Ascending aorta (tissue), 2 donors: ENCODE measurements at regions of chrX and their contacts with region 1.

Region 1: DNA sequence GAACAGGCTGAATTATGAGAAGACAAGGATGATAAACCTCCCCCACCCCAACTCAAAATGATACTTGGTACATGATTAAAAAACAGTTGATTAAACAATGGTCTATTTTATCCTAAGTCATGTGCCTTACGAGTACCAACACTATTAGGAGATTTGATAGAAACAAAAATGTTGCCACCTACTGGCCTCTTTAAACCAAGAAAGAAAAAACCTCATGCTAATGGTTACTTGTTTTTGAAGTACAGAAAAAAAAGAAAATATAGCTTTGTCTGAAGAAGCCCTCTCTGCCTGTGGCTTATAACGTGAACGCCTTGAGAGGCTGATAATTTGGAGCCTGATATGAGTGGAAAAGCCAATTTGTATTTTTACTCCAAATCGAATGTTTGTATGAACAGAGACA is 538.2 kb downstream of the DMD start:
- DNase-seq: no peak
- H3K4me3 ChIP-seq: no peak overlapping the region
- H3K27ac ChIP-seq: no peak overlapping the region
- H3K4me1 ChIP-seq: no peaks in the 10 kb centered on the region
- H3K27me3 ChIP-seq: no peaks in the 10 kb centered on the region
- CTCF ChIP-seq: no peak

Region 2: DNA sequence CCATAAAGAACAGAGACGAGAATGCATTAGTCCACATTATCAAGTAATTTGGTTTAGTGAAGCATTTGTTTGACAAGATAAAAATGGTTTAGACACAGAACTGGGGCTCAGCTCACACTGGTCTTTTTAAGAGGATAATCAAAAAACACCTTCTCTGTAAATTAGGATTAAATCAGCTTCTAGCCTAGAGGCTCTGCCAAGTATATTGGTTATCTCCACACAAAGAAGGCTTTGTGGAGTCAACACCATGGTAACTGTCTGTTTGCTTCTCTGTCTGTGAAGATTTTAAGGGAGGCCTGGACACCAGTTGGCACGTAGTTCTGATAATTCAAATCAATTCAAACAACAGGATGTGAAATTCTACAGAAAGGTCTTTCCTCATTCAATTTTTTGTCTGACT is 148.8 kb before region 1 on chrX:
- intact Hi-C with region 1: loop called (anchors 10 kb)
- DNase-seq: no peak
- H3K4me3 ChIP-seq: no peak overlapping the region
- H3K27ac ChIP-seq: no peak overlapping the region
- H3K4me1 ChIP-seq: no peaks in the 10 kb centered on the region
- H3K27me3 ChIP-seq: no peaks in the 10 kb centered on the region
- CTCF ChIP-seq: no peak

Region 3: GRCh38 chrX:32562261-32562660 is 110.9 kb before region 1 on chrX:
- intact Hi-C with region 1: no loop called
- DNase-seq: no peak
- H3K4me3 ChIP-seq: no peak overlapping the region
- H3K27ac ChIP-seq: no peak overlapping the region
- H3K4me1 ChIP-seq: no peaks in the 10 kb centered on the region
- H3K27me3 ChIP-seq: no peaks in the 10 kb centered on the region
- CTCF ChIP-seq: no peak

Region 4: GRCh38 chrX:32644476-32645245 is 28.5 kb before region 1 on chrX:
- intact Hi-C with region 1: no loop called
- DNase-seq: no peak
- H3K4me3 ChIP-seq: no peak overlapping the region
- H3K27ac ChIP-seq: no peak overlapping the region
- H3K4me1 ChIP-seq: no peaks in the 10 kb centered on the region
- H3K27me3 ChIP-seq: no peaks in the 10 kb centered on the region
- CTCF ChIP-seq: no peak